ENCODE measurements at regions of chr11 and their contacts with region 1.

Region 1: GRCh38 chr11:12888525-12889158 is 120.5 kb upstream of the RASSF10 start:
- DNase-seq: peak; percentile 83
- H3K4me3 ChIP-seq: no peak overlapping the region
- H3K27ac ChIP-seq: no peak overlapping the region
- H3K4me1 ChIP-seq: peaks cover 12% of the 10 kb centered on the region
- H3K27me3 ChIP-seq: no peaks in the 10 kb centered on the region
- CTCF ChIP-seq: peak; percentile 84

Region 2: GRCh38 chr11:12420040-12420439 is 468.6 kb before region 1 on chr11:
- CTCF ChIA-PET with region 1: no interaction called
- POLR2A ChIA-PET with region 1: interaction called, 11 read pairs
- intact Hi-C with region 1: no loop called
- DNase-seq: no peak
- H3K4me3 ChIP-seq: no peak overlapping the region
- H3K27ac ChIP-seq: no peak overlapping the region
- H3K4me1 ChIP-seq: peaks cover 27% of the 10 kb centered on the region
- H3K27me3 ChIP-seq: no peaks in the 10 kb centered on the region
- CTCF ChIP-seq: no peak

Region 3: DNA sequence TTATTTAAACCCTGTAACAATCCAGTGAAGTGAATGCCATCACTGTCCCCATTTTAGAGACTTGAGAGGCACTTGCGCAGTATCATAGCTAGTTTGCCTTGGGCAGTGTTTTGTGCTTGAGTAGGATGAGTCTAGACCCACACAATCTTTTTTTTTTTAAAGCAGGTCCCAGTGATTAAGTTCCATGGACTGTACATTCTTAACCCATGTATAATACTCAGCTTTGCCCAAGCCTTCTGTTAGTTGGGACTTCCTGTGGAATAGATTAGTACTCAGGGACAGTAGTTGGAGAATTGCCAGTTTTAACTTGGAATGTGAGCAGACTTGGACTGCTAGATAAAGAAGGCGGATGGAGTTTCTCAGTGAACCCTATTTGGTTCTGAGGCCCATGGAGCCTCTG is 11.9 kb after region 1 on chr11:
- CTCF ChIA-PET with region 1: no interaction called
- POLR2A ChIA-PET with region 1: no interaction called
- intact Hi-C with region 1: no loop called
- DNase-seq: peak; percentile 69
- H3K4me3 ChIP-seq: no peak overlapping the region
- H3K27ac ChIP-seq: no peak overlapping the region
- H3K4me1 ChIP-seq: peaks cover 6% of the 10 kb centered on the region
- H3K27me3 ChIP-seq: no peaks in the 10 kb centered on the region
- CTCF ChIP-seq: no peak